Activated CD8-positive, alpha-beta memory T cell treated with anti-CD3 and anti-CD28 coated beads, Interleukin-2, amount 10 ng/mL, durations not matched to agents 7 days and 5 days (primary cell): ENCODE measurements at regions of chr2 and their contacts with region 1.

Region 1: GRCh38 chr2:158011055-158011771 is 90.5 kb upstream of the UPP2 start:
- DNase-seq: no peak
- ATAC-seq: no peak
- H3K4me3 Mint-ChIP-seq: no peak overlapping the region
- H3K27ac Mint-ChIP-seq: no peak overlapping the region
- H3K4me1 Mint-ChIP-seq: peaks cover 23% of the 10 kb centered on the region
- H3K27me3 Mint-ChIP-seq: no peaks in the 10 kb centered on the region

Region 2: GRCh38 chr2:157497638-157498314 is 513.4 kb before region 1 on chr2:
- CTCF ChIA-PET with region 1: interaction called, 10 read pairs
- DNase-seq: no peak
- ATAC-seq: peak; percentile 94
- H3K4me3 Mint-ChIP-seq: no peak overlapping the region
- H3K27ac Mint-ChIP-seq: no peak overlapping the region
- H3K4me1 Mint-ChIP-seq: peaks cover 28% of the 10 kb centered on the region
- H3K27me3 Mint-ChIP-seq: no peaks in the 10 kb centered on the region